Common myeloid progenitor, CD34-positive (primary cell): ENCODE measurements at regions of chr11 and their contacts with region 1.

Region 1: GRCh38 chr11:126440792-126441514 is 85.5 kb downstream of the ST3GAL4 start:
- DNase-seq: peak; percentile 68 to 80 (median 74)
- H3K4me3 ChIP-seq: peak overlapping the region in 2 of 7 experiments; percentile 32 to 50
- H3K27ac ChIP-seq: no peak overlapping the region
- H3K4me1 ChIP-seq: peaks cover 0 to 49% (median 15%) of the 10 kb centered on the region in 4 experiments
- H3K27me3 ChIP-seq: no peaks in the 10 kb centered on the region

Region 2: DNA sequence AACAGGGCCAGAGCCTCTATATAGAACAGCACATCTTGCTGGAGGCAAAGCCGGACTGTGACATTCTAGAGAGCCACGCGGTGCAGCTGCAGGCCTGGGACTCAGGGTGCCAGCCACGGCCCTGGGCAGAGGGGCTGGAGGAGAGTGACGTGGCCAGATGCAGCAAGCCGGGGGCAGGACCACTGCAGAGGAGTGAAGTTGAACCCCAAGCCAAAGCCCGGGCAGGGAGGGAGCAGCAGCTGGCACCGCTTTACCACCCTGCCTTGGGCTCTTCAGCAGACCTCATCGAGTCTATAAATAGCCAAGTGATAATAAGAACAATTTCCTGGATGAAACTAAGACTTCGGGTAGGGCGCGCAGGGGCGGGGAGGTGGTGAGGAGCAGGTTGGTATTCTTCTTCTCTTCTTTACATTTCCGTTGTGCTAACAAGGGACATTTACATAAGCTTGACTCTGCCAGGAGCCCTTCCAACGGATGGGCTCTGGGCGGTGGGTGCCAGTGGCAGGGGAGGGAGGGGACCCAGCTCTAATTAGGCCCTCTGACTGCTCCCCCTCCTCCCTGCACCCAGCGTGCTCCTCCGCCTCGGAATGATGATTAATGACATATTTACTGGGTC is 24.7 kb after region 1 on chr11:
- CTCF ChIA-PET with region 1: interaction called, 30 read pairs
- POLR2A ChIA-PET with region 1: no interaction called
- DNase-seq: peak in 1 of 3 donors; percentile 49
- H3K4me3 ChIP-seq: peak overlapping the region in 1 of 7 experiments; percentile 8
- H3K27ac ChIP-seq: no peak overlapping the region
- H3K4me1 ChIP-seq: peaks cover 0 to 74% (median 54%) of the 10 kb centered on the region in 4 experiments
- H3K27me3 ChIP-seq: no peaks in the 10 kb centered on the region